ENCODE measurements at regions of chr18 and their contacts with region 1.

Region 1: GRCh38 chr18:23586249-23587196 is at the start of gene NPC1:
- DNase-seq: peak; percentile 83 to 96 (median 90)
- ATAC-seq: peak; percentile 92
- H3K4me3 ChIP-seq: peak within 1 kb of the TSS; percentile 80
- H3K4me3 Mint-ChIP-seq: peak within 1 kb of the TSS; percentile 95
- H3K27ac ChIP-seq: peak within 1 kb of the TSS; percentile 96 to 98
- H3K27ac Mint-ChIP-seq: peak within 1 kb of the TSS; percentile 95
- H3K4me1 ChIP-seq: peaks cover 44% of the 10 kb centered on the region
- H3K4me1 Mint-ChIP-seq: peaks cover 37% of the 10 kb centered on the region
- H3K27me3 ChIP-seq: no peaks in the 10 kb centered on the region
- H3K27me3 Mint-ChIP-seq: no peaks in the 10 kb centered on the region
- CTCF ChIP-seq: peak; percentile 97
- total RNA-seq, gene NPC1: 17.2 to 17.6 TPM

Region 2: DNA sequence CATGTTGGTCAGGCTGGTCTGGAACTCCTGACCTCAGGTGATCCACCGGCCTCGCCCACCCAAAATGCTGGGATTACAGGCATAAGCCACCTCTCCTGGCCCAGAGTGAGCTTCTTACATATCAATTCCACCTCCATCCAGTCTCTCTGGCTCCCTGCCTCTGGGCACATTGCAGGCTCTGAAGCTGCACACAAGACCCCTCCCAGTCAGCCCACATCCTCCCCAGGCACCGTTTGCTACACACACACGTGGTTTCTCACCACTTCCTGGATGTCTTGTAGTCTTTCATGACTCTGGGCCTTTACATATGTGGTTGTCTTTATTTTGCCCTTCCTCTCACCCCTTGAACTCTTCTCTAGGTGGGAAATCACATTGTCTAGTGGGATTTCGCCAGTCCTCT is 515.2 kb before region 1 on chr18:
- CTCF ChIA-PET with region 1: no interaction called
- POLR2A ChIA-PET with region 1: no interaction called
- intact Hi-C with region 1: loop called in 1 of 2 experiments (anchors 5 kb)
- DNase-seq: peak; percentile 65 to 98 (median 80)
- ATAC-seq: peak; percentile 95
- H3K4me3 ChIP-seq: peak overlapping the region; percentile 27
- H3K4me3 Mint-ChIP-seq: peak overlapping the region; percentile 84
- H3K27ac ChIP-seq: peak overlapping the region; percentile 11 to 23
- H3K27ac Mint-ChIP-seq: peak overlapping the region; percentile 79
- H3K4me1 ChIP-seq: peaks cover 65% of the 10 kb centered on the region
- H3K4me1 Mint-ChIP-seq: peaks cover 82% of the 10 kb centered on the region
- H3K27me3 ChIP-seq: no peaks in the 10 kb centered on the region
- H3K27me3 Mint-ChIP-seq: no peaks in the 10 kb centered on the region
- CTCF ChIP-seq: no peak

Region 3: GRCh38 chr18:23503038-23503962 is 83.2 kb before region 1 on chr18 and contains the start of gene RMC1:
- CTCF ChIA-PET with region 1: interaction called, 10 read pairs
- POLR2A ChIA-PET with region 1: interaction called, 11 read pairs
- intact Hi-C with region 1: loop called (anchors 1 to 5 kb)
- DNase-seq: peak; percentile 92 to 99 (median 97)
- ATAC-seq: peak; percentile 89
- H3K4me3 ChIP-seq: peak within 1 kb of the TSS; percentile 76
- H3K4me3 Mint-ChIP-seq: peak within 1 kb of the TSS; percentile 91
- H3K27ac ChIP-seq: peak within 1 kb of the TSS; percentile 86 to 89
- H3K27ac Mint-ChIP-seq: peak within 1 kb of the TSS; percentile 91
- H3K4me1 ChIP-seq: peaks cover 45% of the 10 kb centered on the region
- H3K4me1 Mint-ChIP-seq: peaks cover 51% of the 10 kb centered on the region
- H3K27me3 ChIP-seq: no peaks in the 10 kb centered on the region
- H3K27me3 Mint-ChIP-seq: no peaks in the 10 kb centered on the region
- CTCF ChIP-seq: no peak
- total RNA-seq, gene RMC1: 46.9 to 48.3 TPM

Region 4: GRCh38 chr18:23540867-23541266 is 45.7 kb before region 1 on chr18:
- CTCF ChIA-PET with region 1: interaction called, 5 read pairs
- POLR2A ChIA-PET with region 1: interaction called, 11 read pairs
- intact Hi-C with region 1: loop called (anchors 2 to 5 kb)
- DNase-seq: peak in 4 of 14 experiments; percentile 11 to 64 (median 57)
- ATAC-seq: peak; percentile 78
- H3K4me3 ChIP-seq: peak overlapping the region; percentile 2
- H3K4me3 Mint-ChIP-seq: peak overlapping the region; percentile 40
- H3K27ac ChIP-seq: peak overlapping the region in 1 of 2 donors; percentile 21
- H3K27ac Mint-ChIP-seq: peak overlapping the region; percentile 73
- H3K4me1 ChIP-seq: peaks cover 35% of the 10 kb centered on the region
- H3K4me1 Mint-ChIP-seq: peaks cover 37% of the 10 kb centered on the region
- H3K27me3 ChIP-seq: no peaks in the 10 kb centered on the region
- H3K27me3 Mint-ChIP-seq: no peaks in the 10 kb centered on the region
- CTCF ChIP-seq: no peak

Region 5: GRCh38 chr18:24426398-24427294 is 840.1 kb after region 1 on chr18 and contains the start of gene IMPACT:
- CTCF ChIA-PET with region 1: no interaction called
- POLR2A ChIA-PET with region 1: no interaction called
- intact Hi-C with region 1: loop called in 1 of 2 experiments (anchors 10 kb)
- DNase-seq: peak; percentile 52 to 91 (median 74)
- ATAC-seq: peak; percentile 86
- H3K4me3 ChIP-seq: peak within 1 kb of the TSS; percentile 74
- H3K4me3 Mint-ChIP-seq: peak within 1 kb of the TSS; percentile 90
- H3K27ac ChIP-seq: no peak within 1 kb of the TSS
- H3K27ac Mint-ChIP-seq: peak within 1 kb of the TSS; percentile 72
- H3K4me1 ChIP-seq: peaks cover 17% of the 10 kb centered on the region
- H3K4me1 Mint-ChIP-seq: peaks cover 32% of the 10 kb centered on the region
- H3K27me3 ChIP-seq: peaks cover 0 to 12% of the 10 kb centered on the region in 2 experiments
- H3K27me3 Mint-ChIP-seq: peaks cover 30% of the 10 kb centered on the region
- CTCF ChIP-seq: no peak
- total RNA-seq, gene IMPACT: 8.4 to 10.6 TPM

Measured in CD4-positive, alpha-beta T cell (primary cell).